PC-3 (cell line): ENCODE measurements at regions of chr13 and their contacts with region 1.

Region 1: GRCh38 chr13:101785858-101786257 is 333.4 kb downstream of the ITGBL1 start:
- DNase-seq: peak; percentile 59
- ATAC-seq: peak; percentile 96
- H3K4me3 ChIP-seq: no peak overlapping the region
- H3K27ac ChIP-seq: no peak overlapping the region
- H3K4me1 ChIP-seq: no peaks in the 10 kb centered on the region
- H3K27me3 ChIP-seq: peaks cover 36% of the 10 kb centered on the region
- CTCF ChIP-seq: peak; percentile 65

Region 2: GRCh38 chr13:101144808-101145419 is 640.9 kb before region 1 on chr13:
- CTCF ChIA-PET with region 1: interaction called, 3 read pairs
- POLR2A ChIA-PET with region 1: no interaction called
- intact Hi-C with region 1: loop called (anchors 10 kb)
- DNase-seq: peak; percentile 74
- ATAC-seq: peak; percentile 68
- H3K4me3 ChIP-seq: no peak overlapping the region
- H3K27ac ChIP-seq: no peak overlapping the region
- H3K4me1 ChIP-seq: peaks cover 22% of the 10 kb centered on the region
- H3K27me3 ChIP-seq: no peaks in the 10 kb centered on the region
- CTCF ChIP-seq: peak; percentile 70

Region 3: DNA sequence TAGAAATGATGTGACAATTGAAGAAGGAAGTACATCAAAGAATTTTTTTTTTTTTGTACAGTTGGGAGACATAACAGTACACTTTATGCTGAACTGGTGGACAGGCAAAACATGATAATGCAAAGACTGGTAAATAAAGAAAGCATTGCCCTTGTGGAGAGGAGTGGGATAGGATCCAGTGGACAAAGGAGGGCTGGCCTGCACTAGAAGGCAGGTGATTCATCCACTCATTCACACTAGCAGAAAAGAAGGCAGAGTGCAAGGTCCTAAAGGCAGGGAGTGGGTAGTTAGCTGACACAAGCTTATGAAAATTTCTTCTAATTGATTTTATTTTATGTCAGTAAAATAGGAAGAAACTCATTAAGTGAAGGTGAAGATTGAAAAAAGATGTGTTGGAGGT is 352.0 kb before region 1 on chr13:
- CTCF ChIA-PET with region 1: no interaction called
- POLR2A ChIA-PET with region 1: interaction called, 10 read pairs
- intact Hi-C with region 1: no loop called
- DNase-seq: peak; percentile 23
- ATAC-seq: peak; percentile 63; the same call in 1 of the 2 replicates
- H3K4me3 ChIP-seq: no peak overlapping the region
- H3K27ac ChIP-seq: no peak overlapping the region
- H3K4me1 ChIP-seq: no peaks in the 10 kb centered on the region
- H3K27me3 ChIP-seq: no peaks in the 10 kb centered on the region
- CTCF ChIP-seq: no peak

Region 4: GRCh38 chr13:101919541-101920181 is 133.8 kb after region 1 on chr13:
- CTCF ChIA-PET with region 1: no interaction called
- POLR2A ChIA-PET with region 1: no interaction called
- intact Hi-C with region 1: loop called (anchors 1 kb)
- DNase-seq: no peak
- ATAC-seq: no peak
- H3K4me3 ChIP-seq: no peak overlapping the region
- H3K27ac ChIP-seq: no peak overlapping the region
- H3K4me1 ChIP-seq: no peaks in the 10 kb centered on the region
- H3K27me3 ChIP-seq: peaks cover 81% of the 10 kb centered on the region
- CTCF ChIP-seq: 0 out of 2 replicates have a peak, but pooled peaks have one; percentile 10

Region 5: DNA sequence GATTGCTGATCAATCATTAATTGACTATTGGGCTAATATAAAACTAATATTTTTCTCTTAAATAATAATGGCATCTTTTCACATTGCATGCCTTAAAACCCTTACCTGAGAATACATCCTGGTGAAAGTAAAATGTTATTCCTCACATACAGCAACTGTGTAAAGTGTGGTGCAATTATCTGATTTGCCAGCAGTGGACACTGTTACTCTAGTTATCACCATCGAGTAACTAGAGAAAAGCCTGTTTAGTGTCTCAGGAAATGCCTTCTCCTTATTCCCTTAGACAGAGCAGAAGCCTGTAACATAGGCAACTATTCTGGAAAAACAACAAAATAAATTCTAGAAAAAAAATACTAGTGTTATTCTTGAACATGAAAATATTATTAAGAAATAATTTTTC is 156.2 kb after region 1 on chr13:
- CTCF ChIA-PET with region 1: interaction called, 4 read pairs
- POLR2A ChIA-PET with region 1: no interaction called
- intact Hi-C with region 1: loop called (anchors 1 kb)
- DNase-seq: peak; percentile 54
- ATAC-seq: peak; percentile 87
- H3K4me3 ChIP-seq: no peak overlapping the region
- H3K27ac ChIP-seq: no peak overlapping the region
- H3K4me1 ChIP-seq: no peaks in the 10 kb centered on the region
- H3K27me3 ChIP-seq: peaks cover 33% of the 10 kb centered on the region
- CTCF ChIP-seq: peak; percentile 57